Activated CD4-positive, alpha-beta T cell treated with anti-CD3 and anti-CD28 coated beads for 36 hours (primary cell): ENCODE measurements at regions of chr4 and their contacts with region 1.

Region 1: DNA sequence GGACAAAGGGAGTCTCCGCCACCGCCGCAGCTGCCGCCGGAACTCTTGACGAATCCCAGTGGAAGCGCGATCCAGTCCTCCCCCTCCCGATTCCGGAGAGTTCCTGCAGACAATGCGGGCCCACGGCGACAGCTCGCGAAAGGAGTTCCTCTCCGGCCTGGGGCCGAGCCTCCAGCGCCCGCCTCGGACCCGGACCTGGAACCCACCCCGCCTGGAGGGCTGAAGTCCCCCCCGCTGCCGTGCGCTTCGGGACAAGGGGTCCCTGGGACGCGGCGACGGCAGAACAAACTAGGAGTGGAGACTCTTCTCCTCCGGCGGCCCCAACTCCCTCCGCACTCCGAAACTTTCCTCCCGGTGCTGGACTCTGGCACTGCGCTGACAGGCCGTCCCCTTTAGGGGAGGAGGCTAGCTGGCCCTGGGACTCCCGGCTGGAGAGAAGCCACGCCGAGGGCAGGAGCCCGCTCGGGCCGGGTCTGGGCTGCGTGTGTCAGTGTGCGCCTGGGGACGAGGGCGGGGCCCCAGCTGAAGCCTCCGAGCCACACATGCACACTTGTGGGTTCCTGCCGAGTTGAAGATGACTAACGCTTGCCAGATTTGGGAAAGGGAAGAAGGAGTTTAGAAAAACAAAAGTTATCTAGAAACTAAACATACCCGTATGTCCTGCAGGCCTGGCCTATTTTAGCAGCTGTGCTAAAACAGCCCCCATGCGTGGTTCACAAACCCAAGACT is at the start of gene ANTXR2:
- DNase-seq: peak; percentile 79
- ATAC-seq: peak; percentile 64
- H3K4me3 Mint-ChIP-seq: peak within 1 kb of the TSS; percentile 80
- H3K27ac Mint-ChIP-seq: peak within 1 kb of the TSS; percentile 82
- H3K4me1 Mint-ChIP-seq: peaks cover 87% of the 10 kb centered on the region
- H3K27me3 Mint-ChIP-seq: peaks cover 4% of the 10 kb centered on the region
- total RNA-seq, gene ANTXR2: 2.3 to 3.8 TPM

Region 2: DNA sequence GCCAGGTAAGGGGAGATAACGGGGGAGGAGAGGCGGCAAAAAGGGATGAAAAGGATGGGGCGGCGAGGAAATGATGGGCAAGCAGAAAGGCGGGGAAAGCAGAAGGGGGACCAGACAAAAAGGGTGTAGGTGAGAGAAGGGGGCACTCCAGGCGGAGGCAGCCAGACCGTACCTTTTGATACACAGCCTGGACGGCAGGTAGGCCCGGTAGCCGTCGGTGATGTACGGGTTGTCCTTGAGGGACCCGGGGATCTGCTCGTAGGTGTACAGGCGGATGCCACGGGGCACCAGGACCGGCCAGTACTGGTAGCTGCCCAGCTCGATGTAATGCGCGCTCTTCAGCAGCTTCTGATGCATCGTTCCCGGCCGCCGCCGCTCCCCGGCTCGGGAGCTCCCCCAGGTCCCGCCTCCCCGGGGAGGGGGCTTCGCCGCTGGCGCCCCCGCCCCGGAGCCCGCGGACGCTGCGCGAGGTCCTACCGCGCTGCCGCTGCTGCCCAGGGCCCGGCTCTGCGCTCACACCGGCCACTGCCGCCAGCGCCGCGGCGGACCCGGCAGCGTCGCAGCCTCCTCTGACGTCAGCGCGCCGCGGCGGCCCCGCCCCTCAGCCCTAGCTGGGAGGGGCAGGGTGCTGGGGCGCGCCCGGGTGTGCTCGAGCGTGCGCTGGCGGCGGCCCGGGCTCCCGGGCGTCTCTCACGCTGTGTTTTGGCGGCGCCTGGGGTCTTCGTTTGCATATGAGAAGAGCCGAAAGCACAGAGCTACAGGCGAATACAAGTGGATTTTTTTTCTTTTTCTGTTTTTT is 1133.8 kb before region 1 on chr4 and contains the start of gene PAQR3:
- CTCF ChIA-PET with region 1: no interaction called
- POLR2A ChIA-PET with region 1: no interaction called
- intact Hi-C with region 1: loop called in 1 of 2 experiments (anchors 5 kb)
- DNase-seq: peak; percentile 91
- ATAC-seq: peak; percentile 95
- H3K4me3 Mint-ChIP-seq: peak within 1 kb of the TSS; percentile 88
- H3K27ac Mint-ChIP-seq: peak within 1 kb of the TSS; percentile 83
- H3K4me1 Mint-ChIP-seq: peaks cover 30% of the 10 kb centered on the region
- H3K27me3 Mint-ChIP-seq: peaks cover 8% of the 10 kb centered on the region
- total RNA-seq, gene PAQR3: 7.8 to 8.8 TPM

Region 3: DNA sequence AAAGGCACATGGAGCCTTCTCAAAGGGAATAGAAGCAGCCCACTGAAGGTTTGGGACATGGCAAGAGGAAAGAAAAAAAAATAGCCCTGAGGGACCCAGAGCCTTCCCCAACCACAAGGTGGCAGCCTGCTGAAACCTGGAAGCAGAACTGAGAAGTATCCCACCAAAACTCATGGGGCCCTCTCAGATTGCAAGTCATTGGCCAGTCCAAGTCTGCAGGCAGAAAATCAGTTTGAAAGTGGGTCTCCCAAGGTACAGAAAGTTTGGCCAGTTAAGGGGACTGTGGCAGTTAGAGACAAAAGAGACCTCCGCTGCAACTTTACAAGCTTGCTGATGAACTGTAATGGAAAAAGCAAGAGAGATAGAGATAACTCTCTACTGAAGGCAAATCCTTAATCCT is 155.7 kb before region 1 on chr4:
- CTCF ChIA-PET with region 1: no interaction called
- POLR2A ChIA-PET with region 1: no interaction called
- intact Hi-C with region 1: loop called in 1 of 2 experiments (anchors 5 kb)
- DNase-seq: peak; percentile 67
- ATAC-seq: peak; percentile 60
- H3K4me3 Mint-ChIP-seq: no peak overlapping the region
- H3K27ac Mint-ChIP-seq: peak overlapping the region; percentile 58
- H3K4me1 Mint-ChIP-seq: peaks cover 19% of the 10 kb centered on the region
- H3K27me3 Mint-ChIP-seq: no peaks in the 10 kb centered on the region

Region 4: DNA sequence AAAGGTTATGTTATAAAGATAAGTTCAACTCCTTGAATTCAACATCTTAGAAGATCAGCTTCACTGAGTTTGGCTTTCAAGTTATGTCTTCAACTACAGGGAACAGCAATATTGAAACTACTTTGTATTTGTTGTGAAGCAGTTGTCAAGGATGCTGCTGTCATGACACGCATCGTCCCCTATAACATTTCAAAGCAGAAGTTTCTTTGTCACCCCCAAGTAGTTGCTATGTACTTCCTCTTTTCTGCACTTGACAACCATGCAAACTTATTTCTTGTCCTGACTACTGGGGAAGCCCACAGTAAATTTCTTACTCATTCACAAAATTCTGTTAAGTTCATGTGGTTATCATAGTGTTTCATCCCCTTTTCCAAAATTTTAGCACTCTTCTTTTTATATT is 14.2 kb before region 1 on chr4:
- CTCF ChIA-PET with region 1: interaction called, 14 read pairs
- POLR2A ChIA-PET with region 1: interaction called, 3 read pairs
- intact Hi-C with region 1: loop called (anchors 1 kb)
- DNase-seq: peak; percentile 59
- ATAC-seq: peak; percentile 86
- H3K4me3 Mint-ChIP-seq: peak overlapping the region; percentile 68
- H3K27ac Mint-ChIP-seq: peak overlapping the region; percentile 89
- H3K4me1 Mint-ChIP-seq: peaks cover 54% of the 10 kb centered on the region
- H3K27me3 Mint-ChIP-seq: no peaks in the 10 kb centered on the region

Region 5: GRCh38 chr4:80125252-80126177 is 52.6 kb after region 1 on chr4:
- CTCF ChIA-PET with region 1: interaction called, 3 read pairs
- POLR2A ChIA-PET with region 1: no interaction called
- intact Hi-C with region 1: loop called (anchors 2 kb)
- DNase-seq: peak; percentile 42
- ATAC-seq: peak; percentile 79
- H3K4me3 Mint-ChIP-seq: peak overlapping the region; percentile 9
- H3K27ac Mint-ChIP-seq: peak overlapping the region; percentile 39
- H3K4me1 Mint-ChIP-seq: peaks cover 49% of the 10 kb centered on the region
- H3K27me3 Mint-ChIP-seq: no peaks in the 10 kb centered on the region

Region 6: DNA sequence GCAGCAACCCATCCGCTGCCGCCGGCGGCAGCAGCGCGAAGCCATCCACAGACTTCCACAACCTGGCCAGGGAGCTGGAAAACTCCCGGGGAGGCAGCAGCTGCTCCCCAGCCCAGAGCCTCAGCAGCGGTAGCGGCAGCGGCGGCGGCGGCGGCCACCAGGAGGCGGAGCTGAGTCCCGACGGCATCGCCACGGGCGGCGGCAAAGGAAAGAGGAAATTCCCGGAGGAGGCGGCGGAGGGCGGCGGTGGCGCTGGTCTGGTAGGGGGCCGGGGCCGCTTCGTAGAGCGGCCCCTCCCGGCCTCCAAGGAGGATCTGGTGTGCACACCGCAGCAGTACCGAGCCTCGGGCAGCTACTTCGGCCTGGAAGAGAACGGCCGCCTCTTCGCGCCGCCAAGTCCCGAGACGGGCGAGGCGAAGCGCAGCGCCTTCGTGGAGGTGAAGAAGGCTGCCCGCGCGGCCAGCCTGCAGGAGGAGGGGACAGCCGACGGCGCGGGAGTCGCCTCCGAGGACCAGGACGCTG is 129.3 kb after region 1 on chr4:
- CTCF ChIA-PET with region 1: interaction called, 7 read pairs
- POLR2A ChIA-PET with region 1: interaction called, 3 read pairs
- intact Hi-C with region 1: loop called (anchors 5 kb)
- DNase-seq: peak; percentile 88
- ATAC-seq: peak; percentile 66
- H3K4me3 Mint-ChIP-seq: peak overlapping the region; percentile 68
- H3K27ac Mint-ChIP-seq: peak overlapping the region; percentile 64
- H3K4me1 Mint-ChIP-seq: peaks cover 30% of the 10 kb centered on the region
- H3K27me3 Mint-ChIP-seq: peaks cover 17% of the 10 kb centered on the region